GM10248 (cell line): ENCODE measurements at regions of chr10 and their contacts with region 1.

Region 1: DNA sequence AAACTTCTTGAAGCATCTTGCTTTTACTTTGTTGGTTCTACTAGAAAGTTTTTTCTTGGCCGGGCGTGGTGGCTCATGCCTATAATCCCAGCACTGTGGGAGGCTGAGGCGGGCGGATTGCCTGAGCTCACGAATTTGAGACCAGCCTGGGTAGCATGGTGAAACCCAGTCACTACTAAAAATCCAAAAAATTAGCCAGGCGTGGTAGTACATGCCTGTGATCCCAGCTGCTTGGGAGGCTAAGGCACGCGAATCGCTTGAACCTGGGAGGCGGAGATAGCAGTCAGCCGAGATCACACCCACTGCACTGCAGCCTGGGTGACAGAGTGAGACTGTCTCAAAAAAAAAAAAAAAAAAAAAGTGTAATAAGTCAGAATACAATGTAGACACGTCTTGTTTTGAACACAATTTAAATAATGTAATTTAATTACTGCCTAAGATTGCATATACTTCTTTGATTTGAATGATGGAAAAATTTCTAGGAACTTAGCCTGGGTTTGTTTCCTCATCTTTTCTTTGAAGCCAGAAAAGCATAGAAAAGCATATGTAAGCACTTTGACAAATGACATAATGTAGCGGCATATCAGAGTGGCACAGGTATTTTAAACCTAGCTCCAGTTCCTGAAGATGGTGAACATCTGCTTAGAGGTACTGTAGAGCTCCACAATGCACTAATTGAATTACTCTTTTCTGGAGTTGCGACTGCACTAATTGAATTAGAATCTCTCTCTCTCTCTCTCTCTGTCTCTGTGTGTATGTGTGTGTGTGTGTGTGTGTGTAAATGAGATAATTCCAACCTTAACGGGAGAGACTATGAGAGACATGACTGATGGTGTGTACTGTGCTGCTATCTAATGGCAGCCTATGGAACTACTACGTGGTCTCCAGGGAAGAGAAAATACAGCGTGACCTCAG is 87.8 kb downstream of the BTRC start:
- DNase-seq: peak; percentile 58
- CTCF ChIP-seq: peak; percentile 64

Region 2: DNA sequence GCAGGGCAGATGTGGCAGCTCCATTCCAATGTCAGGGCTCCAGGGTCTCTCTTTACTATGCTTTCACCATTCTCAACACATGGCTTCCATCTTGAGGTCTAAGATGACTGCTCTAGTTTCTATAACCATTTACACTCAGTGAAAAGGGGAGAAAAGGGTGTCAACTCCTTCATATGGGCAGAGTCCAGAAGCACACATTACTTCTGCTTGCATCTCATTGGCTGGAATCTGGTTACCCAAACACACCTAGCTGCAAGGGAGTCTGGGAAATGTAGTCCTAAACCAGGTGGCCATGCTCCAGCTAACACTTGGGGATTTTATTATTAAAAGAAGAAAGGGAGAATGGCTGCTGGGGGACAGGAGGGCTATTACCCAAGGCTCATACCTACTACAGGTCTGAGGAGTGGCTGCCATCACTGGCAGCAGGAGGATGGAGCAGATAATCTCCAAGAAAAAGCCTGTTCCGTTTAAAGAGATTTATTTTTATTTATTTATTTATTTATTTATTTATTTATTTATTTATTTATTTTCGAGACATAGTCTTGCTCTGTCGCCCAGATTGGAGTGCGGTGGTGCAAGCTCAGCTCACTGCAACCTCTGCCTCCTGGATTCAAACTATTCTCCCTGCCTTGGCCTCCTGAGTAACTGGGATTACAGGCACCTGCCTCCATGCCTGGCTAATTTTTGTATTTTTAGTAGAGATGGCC is 183.5 kb before region 1 on chr10:
- CTCF ChIA-PET with region 1: no interaction called
- POLR2A ChIA-PET with region 1: no interaction called
- DNase-seq: no peak
- CTCF ChIP-seq: no peak

Region 3: GRCh38 chr10:101272229-101272868 is 169.4 kb before region 1 on chr10:
- CTCF ChIA-PET with region 1: interaction called, 15 read pairs
- POLR2A ChIA-PET with region 1: no interaction called
- DNase-seq: peak; percentile 84
- CTCF ChIP-seq: peak; percentile 81

Region 4: DNA sequence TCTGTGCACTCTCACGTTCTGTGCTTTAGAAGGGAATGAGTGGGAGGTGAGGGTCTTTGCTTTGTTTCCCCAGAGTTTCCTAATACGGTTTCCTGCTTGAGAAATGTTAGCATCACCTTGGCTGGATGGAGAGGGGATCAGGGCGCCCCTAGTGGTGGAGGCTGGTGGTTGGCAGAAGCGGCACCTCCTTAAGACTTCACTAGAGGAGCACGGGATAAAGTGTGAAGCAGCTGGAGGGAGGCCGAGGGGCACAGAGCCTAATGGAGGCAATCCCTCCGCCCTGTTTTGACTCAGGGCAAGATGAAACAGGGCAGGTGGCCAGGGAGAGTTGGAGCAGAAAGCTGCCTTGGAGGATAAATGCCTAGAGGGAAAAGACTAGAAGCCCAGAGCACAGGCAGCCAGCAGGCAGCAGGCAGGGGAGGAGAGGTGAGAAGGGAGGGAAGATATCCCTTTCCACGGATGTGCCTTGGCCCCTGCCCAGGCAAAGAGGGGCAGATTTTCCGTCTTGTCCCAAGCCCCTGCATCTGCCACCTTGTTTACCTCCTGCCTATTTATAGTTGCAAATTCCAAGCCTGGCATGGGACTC is 143.8 kb before region 1 on chr10:
- CTCF ChIA-PET with region 1: interaction called, 17 read pairs
- POLR2A ChIA-PET with region 1: no interaction called
- DNase-seq: peak; percentile 75
- CTCF ChIP-seq: peak; percentile 89

Region 5: GRCh38 chr10:101429423-101429822 is 12.4 kb before region 1 on chr10:
- CTCF ChIA-PET with region 1: interaction called, 10 read pairs
- POLR2A ChIA-PET with region 1: no interaction called
- DNase-seq: no peak
- CTCF ChIP-seq: no peak

Region 6: GRCh38 chr10:101453791-101454718 is 12.3 kb after region 1 on chr10:
- CTCF ChIA-PET with region 1: interaction called, 37 read pairs
- POLR2A ChIA-PET with region 1: interaction called, 3 read pairs
- DNase-seq: no peak
- CTCF ChIP-seq: no peak

Region 7: GRCh38 chr10:101467286-101467770 is 25.5 kb after region 1 on chr10:
- CTCF ChIA-PET with region 1: interaction called, 18 read pairs
- POLR2A ChIA-PET with region 1: no interaction called
- DNase-seq: peak; percentile 67
- CTCF ChIP-seq: peak; percentile 78

Region 8: DNA sequence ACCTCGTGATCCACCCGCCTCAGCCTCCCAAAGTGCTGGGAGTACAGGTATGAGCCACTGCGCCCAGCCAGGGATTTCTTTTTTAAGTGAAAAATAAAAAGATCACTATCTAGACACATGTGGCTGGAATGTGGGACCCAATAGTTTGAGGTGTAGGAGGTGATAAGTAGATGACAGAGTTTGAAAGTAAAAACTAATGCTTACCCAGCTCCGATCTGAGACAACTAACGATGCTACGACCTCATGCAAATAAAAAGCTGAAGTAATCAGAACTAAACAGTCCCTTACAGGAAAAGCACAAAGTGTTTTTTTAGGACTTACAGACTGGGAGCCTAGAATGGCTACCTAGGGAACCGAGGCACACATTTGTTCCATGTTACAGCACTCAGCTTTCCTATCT is 1886.1 kb after region 1 on chr10:
- CTCF ChIA-PET with region 1: no interaction called
- POLR2A ChIA-PET with region 1: no interaction called
- DNase-seq: peak; percentile 34
- CTCF ChIP-seq: no peak